Kidney (tissue), 22 donors: ENCODE measurements at regions of chrX and their contacts with region 1.

Region 1: GRCh38 chrX:14029425-14030173 is at the start of gene GEMIN8:
- DNase-seq: peak; percentile 90 to 97 (median 94)
- H3K4me3 ChIP-seq: peak within 1 kb of the TSS; percentile 72 to 82 (median 77)
- H3K27ac ChIP-seq: peak within 1 kb of the TSS; percentile 74 to 84
- H3K4me1 ChIP-seq: peaks cover 0 to 5% (median 0%) of the 10 kb centered on the region in 3 donors
- H3K27me3 ChIP-seq: peaks cover 11% of the 10 kb centered on the region
- CTCF ChIP-seq: no peak
- total RNA-seq, gene GEMIN8: 30.0 TPM

Region 2: DNA sequence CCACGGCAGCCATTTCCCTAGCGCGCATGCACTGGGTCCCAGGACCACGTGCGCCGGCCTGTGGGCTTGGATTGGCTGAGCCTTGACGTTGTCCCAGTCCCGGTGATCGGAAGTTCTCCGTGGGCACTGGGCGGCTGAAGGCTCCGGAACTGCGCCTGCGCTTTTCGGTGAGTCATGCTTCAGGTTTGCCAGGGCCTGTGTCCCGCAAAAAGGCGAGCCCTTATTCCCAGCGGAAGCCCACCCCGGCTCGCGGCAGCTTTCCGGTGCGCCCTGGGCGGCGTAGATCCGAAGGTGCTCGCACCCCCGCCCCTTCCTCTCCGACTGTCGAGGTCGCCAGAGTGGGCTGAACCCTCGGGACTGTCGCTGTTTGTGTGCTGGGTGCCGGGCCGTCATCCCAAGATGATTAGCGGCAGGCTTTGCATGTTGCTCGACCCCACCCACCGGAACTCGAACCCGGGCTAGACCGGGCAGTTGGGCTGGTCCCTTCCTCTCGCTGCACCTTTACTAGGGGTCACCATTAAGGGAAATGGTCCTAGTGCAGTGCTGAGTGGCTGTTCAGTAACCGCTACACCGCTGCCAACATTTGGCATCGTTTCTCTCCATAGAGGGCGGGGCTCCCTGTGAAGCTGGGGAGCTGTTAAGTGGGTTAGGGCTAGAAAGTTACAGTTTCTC is 376.4 kb before region 1 on chrX and contains the start of gene TCEANC:
- intact Hi-C with region 1: loop called (anchors 10 kb)
- DNase-seq: peak; percentile 95 to 99 (median 97)
- H3K4me3 ChIP-seq: peak within 1 kb of the TSS; percentile 63 to 91 (median 87)
- H3K27ac ChIP-seq: peak within 1 kb of the TSS; percentile 95 to 97
- H3K4me1 ChIP-seq: peaks cover 0 to 5% (median 0%) of the 10 kb centered on the region in 3 donors
- H3K27me3 ChIP-seq: peaks cover 10% of the 10 kb centered on the region
- CTCF ChIP-seq: no peak
- total RNA-seq, gene TCEANC: 5.3 TPM

Region 3: DNA sequence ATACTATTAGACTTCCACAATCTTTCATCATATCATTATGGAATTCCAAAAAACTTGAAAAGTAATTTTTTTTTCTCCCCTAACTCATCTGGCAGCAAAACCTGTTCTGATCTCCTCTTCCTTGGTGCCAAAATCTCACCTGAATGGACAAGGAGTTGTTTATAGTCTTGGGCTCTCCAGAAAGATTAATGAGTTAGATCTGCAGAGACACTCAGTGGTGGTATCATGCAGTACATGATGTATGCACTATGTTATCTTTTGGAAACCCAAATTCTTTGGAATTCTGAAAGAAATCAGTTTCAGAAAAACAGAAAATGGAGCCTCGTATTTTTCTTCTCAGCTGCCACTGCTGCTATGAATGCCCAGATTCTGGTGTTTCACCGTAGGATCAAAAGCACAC is 224.4 kb before region 1 on chrX:
- intact Hi-C with region 1: no loop called
- DNase-seq: no peak
- H3K4me3 ChIP-seq: no peak overlapping the region
- H3K27ac ChIP-seq: no peak overlapping the region
- H3K4me1 ChIP-seq: no peaks in the 10 kb centered on the region
- H3K27me3 ChIP-seq: no peaks in the 10 kb centered on the region
- CTCF ChIP-seq: no peak

Region 4: DNA sequence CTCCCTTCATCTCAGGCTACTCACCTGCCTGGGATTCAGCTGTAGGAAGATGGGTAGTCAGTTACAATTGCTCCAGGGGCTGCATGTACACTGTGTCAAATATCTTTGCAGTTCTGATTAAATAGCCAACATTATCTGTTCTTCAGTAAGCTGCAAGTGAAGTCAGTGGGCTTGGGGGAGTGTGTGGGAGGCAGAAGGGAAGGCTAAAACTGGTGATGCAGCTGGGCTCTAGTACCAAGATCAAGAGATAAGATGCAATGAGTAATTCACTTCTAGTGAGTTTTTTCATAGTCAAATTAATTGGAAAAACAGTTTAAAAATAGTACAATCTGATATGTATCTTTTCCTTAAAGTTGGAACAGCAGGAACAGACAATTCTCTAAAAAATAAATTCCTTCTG is 460.5 kb after region 1 on chrX:
- intact Hi-C with region 1: no loop called
- DNase-seq: peak in 3 of 5 donors; percentile 6 to 21 (median 18)
- H3K4me3 ChIP-seq: no peak overlapping the region
- H3K27ac ChIP-seq: no peak overlapping the region
- H3K4me1 ChIP-seq: no peaks in the 10 kb centered on the region
- H3K27me3 ChIP-seq: peaks cover 2% of the 10 kb centered on the region
- CTCF ChIP-seq: no peak